ENCODE measurements at regions of chr19 and their contacts with region 1.

Region 1: GRCh38 chr19:2962045-2962561 is 15.3 kb upstream of the TLE6 start:
- DNase-seq: peak; percentile 55 to 79
- H3K4me3 ChIP-seq: no peak overlapping the region
- H3K4me3 Mint-ChIP-seq: no peak overlapping the region
- H3K27ac Mint-ChIP-seq: no peak overlapping the region
- H3K4me1 ChIP-seq: no peaks in the 10 kb centered on the region
- H3K4me1 Mint-ChIP-seq: peaks cover 7% of the 10 kb centered on the region
- H3K27me3 ChIP-seq: no peaks in the 10 kb centered on the region
- H3K27me3 Mint-ChIP-seq: no peaks in the 10 kb centered on the region
- CTCF ChIP-seq: peak; percentile 44 to 87

Region 2: DNA sequence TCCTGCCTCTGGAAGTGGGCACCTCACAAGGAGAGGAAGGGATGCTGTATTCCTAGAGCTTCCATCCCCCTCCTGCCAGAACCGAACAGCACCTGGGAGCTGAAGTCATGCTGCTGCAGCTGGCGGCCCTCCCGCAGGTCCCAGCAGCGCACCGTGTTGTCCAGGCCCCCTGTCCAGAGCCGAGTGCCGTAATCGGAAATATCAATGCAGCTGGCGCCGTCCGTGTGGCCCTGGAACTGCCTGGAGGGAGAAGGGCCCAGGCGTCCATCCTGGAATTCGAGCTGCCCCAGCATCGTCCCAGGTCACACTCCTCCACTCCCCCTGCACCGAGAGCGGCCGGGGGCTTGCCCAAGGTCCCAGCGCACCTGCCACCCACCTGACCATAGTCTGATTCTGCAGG is 43.2 kb after region 1 on chr19:
- CTCF ChIA-PET with region 1: interaction called, 11 read pairs
- POLR2A ChIA-PET with region 1: no interaction called
- intact Hi-C with region 1: no loop called
- DNase-seq: no peak
- H3K4me3 ChIP-seq: no peak overlapping the region
- H3K4me3 Mint-ChIP-seq: no peak overlapping the region
- H3K27ac Mint-ChIP-seq: no peak overlapping the region
- H3K4me1 ChIP-seq: no peaks in the 10 kb centered on the region
- H3K4me1 Mint-ChIP-seq: no peaks in the 10 kb centered on the region
- H3K27me3 ChIP-seq: no peaks in the 10 kb centered on the region
- H3K27me3 Mint-ChIP-seq: no peaks in the 10 kb centered on the region
- CTCF ChIP-seq: no peak

Region 3: GRCh38 chr19:3029065-3029923 is 67.2 kb after region 1 on chr19 and contains the start of gene TLE2:
- CTCF ChIA-PET with region 1: no interaction called
- POLR2A ChIA-PET with region 1: no interaction called
- intact Hi-C with region 1: loop called (anchors 2 kb)
- DNase-seq: no peak
- H3K4me3 ChIP-seq: peak within 1 kb of the TSS; percentile 79
- H3K4me3 Mint-ChIP-seq: peak within 1 kb of the TSS; percentile 72
- H3K27ac Mint-ChIP-seq: no peak within 1 kb of the TSS
- H3K4me1 ChIP-seq: peaks cover 21% of the 10 kb centered on the region
- H3K4me1 Mint-ChIP-seq: peaks cover 24% of the 10 kb centered on the region
- H3K27me3 ChIP-seq: no peaks in the 10 kb centered on the region
- H3K27me3 Mint-ChIP-seq: no peaks in the 10 kb centered on the region
- CTCF ChIP-seq: no peak
- total RNA-seq, gene TLE2: 29.2 and 31.3 TPM in 2 replicates

Region 4: DNA sequence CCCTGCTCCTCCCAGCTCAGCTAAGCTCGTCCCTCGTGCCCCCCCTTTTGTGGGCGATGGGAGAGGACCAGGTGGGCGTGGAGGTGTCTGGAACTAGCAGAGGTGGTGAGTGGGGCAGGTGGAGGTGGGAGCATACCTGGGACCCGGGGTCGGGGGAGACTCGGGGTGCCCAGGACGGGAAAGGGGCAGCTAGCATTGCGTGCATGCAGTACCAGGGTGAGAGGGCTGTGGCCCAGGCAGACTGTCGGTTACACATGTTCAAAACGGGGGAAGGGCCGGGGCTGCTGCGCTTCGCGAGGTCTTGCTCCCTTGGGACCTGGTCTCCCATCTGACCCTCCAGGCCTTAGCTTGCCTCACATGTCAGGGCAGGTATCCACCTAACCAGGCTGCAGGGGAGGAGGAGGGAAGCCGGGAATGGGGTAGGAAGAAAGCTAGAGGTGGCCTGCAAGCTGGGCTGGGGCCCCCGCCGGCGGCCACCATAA is 91.2 kb after region 1 on chr19:
- CTCF ChIA-PET with region 1: no interaction called
- POLR2A ChIA-PET with region 1: no interaction called
- intact Hi-C with region 1: no loop called
- DNase-seq: no peak
- H3K4me3 ChIP-seq: no peak overlapping the region
- H3K4me3 Mint-ChIP-seq: no peak overlapping the region
- H3K27ac Mint-ChIP-seq: no peak overlapping the region
- H3K4me1 ChIP-seq: peaks cover 9% of the 10 kb centered on the region; the same call in 1 of the 2 replicates
- H3K4me1 Mint-ChIP-seq: peaks cover 6% of the 10 kb centered on the region
- H3K27me3 ChIP-seq: no peaks in the 10 kb centered on the region
- H3K27me3 Mint-ChIP-seq: no peaks in the 10 kb centered on the region
- CTCF ChIP-seq: no peak

Region 5: GRCh38 chr19:3108775-3109174 is 146.7 kb after region 1 on chr19:
- CTCF ChIA-PET with region 1: interaction called, 6 read pairs
- POLR2A ChIA-PET with region 1: no interaction called
- intact Hi-C with region 1: loop called (anchors 5 kb)
- DNase-seq: peak; percentile 66 to 70
- H3K4me3 ChIP-seq: no peak overlapping the region
- H3K4me3 Mint-ChIP-seq: no peak overlapping the region
- H3K27ac Mint-ChIP-seq: peak overlapping the region; percentile 55
- H3K4me1 ChIP-seq: no peaks in the 10 kb centered on the region; the same call in 1 of the 2 replicates
- H3K4me1 Mint-ChIP-seq: no peaks in the 10 kb centered on the region
- H3K27me3 ChIP-seq: no peaks in the 10 kb centered on the region
- H3K27me3 Mint-ChIP-seq: no peaks in the 10 kb centered on the region
- CTCF ChIP-seq: peak; percentile 72 to 74

Region 6: GRCh38 chr19:3125900-3126524 is 163.9 kb after region 1 on chr19:
- CTCF ChIA-PET with region 1: interaction called, 4 read pairs
- POLR2A ChIA-PET with region 1: interaction called, 6 read pairs
- intact Hi-C with region 1: loop called (anchors 5 kb)
- DNase-seq: peak; percentile 66 to 73
- H3K4me3 ChIP-seq: no peak overlapping the region
- H3K4me3 Mint-ChIP-seq: no peak overlapping the region
- H3K27ac Mint-ChIP-seq: no peak overlapping the region
- H3K4me1 ChIP-seq: no peaks in the 10 kb centered on the region
- H3K4me1 Mint-ChIP-seq: no peaks in the 10 kb centered on the region
- H3K27me3 ChIP-seq: no peaks in the 10 kb centered on the region
- H3K27me3 Mint-ChIP-seq: no peaks in the 10 kb centered on the region
- CTCF ChIP-seq: peak; percentile 65 to 75

Region 7: DNA sequence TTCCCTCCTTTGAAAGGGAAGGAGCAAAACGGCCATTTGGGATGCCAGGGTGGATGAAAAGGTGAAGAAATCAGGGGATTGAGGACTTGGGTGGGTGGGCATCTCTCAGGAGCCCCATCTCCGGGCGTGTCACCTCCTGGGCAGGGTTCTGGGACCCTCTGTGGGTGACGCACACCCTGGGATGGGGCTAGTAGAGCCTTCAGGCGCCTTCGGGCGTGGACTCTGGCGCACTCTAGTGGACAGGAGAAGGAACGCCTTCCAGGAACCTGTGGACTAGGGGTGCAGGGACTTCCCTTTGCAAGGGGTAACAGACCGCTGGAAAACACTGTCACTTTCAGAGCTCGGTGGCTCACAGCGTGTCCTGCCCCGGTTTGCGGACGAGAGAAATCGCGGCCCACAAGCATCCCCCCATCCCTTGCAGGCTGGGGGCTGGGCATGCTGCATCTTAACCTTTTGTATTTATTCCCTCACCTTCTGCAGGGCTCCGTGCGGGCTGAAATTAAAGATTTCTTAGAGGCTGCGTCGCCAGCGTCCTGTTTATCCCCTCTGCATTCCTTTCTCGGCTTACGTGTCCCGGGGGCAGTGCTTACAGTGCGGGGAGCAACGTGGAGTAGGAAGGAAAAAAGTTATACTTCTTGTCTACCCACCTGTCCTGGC is 201.3 kb after region 1 on chr19:
- CTCF ChIA-PET with region 1: interaction called, 3 read pairs
- POLR2A ChIA-PET with region 1: no interaction called
- intact Hi-C with region 1: loop called (anchors 1 kb)
- DNase-seq: peak; percentile 62 to 75
- H3K4me3 ChIP-seq: peak overlapping the region; percentile 17; the same call in 1 of the 2 replicates
- H3K4me3 Mint-ChIP-seq: peak overlapping the region; percentile 22
- H3K27ac Mint-ChIP-seq: no peak overlapping the region
- H3K4me1 ChIP-seq: no peaks in the 10 kb centered on the region
- H3K4me1 Mint-ChIP-seq: no peaks in the 10 kb centered on the region
- H3K27me3 ChIP-seq: no peaks in the 10 kb centered on the region
- H3K27me3 Mint-ChIP-seq: no peaks in the 10 kb centered on the region
- CTCF ChIP-seq: peak; percentile 83 to 93

Measured in Caco-2 (cell line).